BJ (cell line): ENCODE measurements at regions of chr3 and their contacts with region 1.

Region 1: DNA sequence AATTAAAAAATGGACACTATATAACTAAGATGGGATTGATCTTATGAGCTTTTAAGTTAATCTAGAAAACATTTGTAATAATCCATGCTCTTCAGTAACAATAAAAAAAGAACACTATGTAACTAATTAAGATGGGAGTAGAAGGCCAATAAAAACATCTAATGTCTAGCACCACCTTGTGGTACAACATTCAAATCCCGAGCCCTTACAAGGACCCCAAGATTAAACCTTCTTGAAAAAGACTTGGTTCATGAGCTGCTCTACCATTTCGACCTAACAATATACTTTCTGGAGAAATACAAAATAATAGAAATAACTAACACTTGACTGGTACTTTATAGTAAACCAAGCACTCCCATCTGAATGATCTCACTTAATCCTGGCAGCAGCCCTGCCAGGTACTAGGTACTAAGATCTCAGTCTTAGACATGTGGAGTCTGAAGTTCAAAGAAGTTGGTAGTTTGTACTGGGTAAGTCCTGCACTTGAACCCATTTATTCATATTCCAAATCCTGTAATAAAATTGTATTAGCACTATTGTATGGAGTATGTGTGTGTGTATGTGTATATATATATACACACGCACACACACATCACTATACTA is 21.8 kb downstream of the METTL6 start:
- DNase-seq: no peak
- H3K4me3 ChIP-seq: no peak overlapping the region
- H3K27me3 ChIP-seq: no peaks in the 10 kb centered on the region
- CTCF ChIP-seq: peak; percentile 58

Region 2: DNA sequence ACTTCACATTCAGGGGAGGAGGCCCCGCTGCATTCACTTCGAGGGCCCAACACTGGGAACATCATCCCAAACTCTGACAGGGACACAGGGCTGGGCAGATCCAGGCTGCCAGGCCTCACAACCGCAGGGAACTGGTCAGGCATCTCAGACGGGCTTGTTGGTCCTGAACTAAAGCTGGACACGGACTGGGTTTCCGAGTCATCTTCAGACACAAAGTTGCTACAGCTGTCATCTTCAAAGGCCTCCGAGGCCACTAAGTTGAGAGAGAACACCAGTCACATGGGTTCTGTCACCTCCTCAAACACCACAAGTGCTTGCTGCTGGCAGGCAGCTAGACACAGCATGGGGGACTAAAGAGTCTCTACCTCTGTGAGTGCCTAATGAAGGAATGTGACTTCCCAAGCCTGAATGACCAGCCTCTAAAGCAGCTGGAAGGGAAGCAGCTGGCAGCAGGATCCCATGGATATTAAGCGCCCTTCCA is 148.6 kb before region 1 on chr3:
- CTCF ChIA-PET with region 1: interaction called, 10 read pairs
- POLR2A ChIA-PET with region 1: no interaction called
- DNase-seq: no peak
- H3K4me3 ChIP-seq: no peak overlapping the region
- H3K27me3 ChIP-seq: no peaks in the 10 kb centered on the region
- CTCF ChIP-seq: no peak

Region 3: GRCh38 chr3:15384510-15385237 is 20.9 kb before region 1 on chr3:
- CTCF ChIA-PET with region 1: interaction called, 10 read pairs
- POLR2A ChIA-PET with region 1: no interaction called
- DNase-seq: no peak
- H3K4me3 ChIP-seq: no peak overlapping the region
- H3K27me3 ChIP-seq: no peaks in the 10 kb centered on the region
- CTCF ChIP-seq: no peak